Activated CD8-positive, alpha-beta memory T cell treated with anti-CD3 and anti-CD28 coated beads, Interleukin-2, amount 10 ng/mL, durations not matched to agents 7 days and 5 days (primary cell): ENCODE measurements at regions of chr20 and their contacts with region 1.

Region 1: GRCh38 chr20:38446441-38447209 is 11.5 kb upstream of the SNHG17 start:
- DNase-seq: peak; percentile 94
- ATAC-seq: peak; percentile 97
- H3K4me3 Mint-ChIP-seq: peak overlapping the region; percentile 72
- H3K27ac Mint-ChIP-seq: peak overlapping the region; percentile 77
- H3K4me1 Mint-ChIP-seq: peaks cover 21% of the 10 kb centered on the region
- H3K27me3 Mint-ChIP-seq: peaks cover 9% of the 10 kb centered on the region

Region 2: DNA sequence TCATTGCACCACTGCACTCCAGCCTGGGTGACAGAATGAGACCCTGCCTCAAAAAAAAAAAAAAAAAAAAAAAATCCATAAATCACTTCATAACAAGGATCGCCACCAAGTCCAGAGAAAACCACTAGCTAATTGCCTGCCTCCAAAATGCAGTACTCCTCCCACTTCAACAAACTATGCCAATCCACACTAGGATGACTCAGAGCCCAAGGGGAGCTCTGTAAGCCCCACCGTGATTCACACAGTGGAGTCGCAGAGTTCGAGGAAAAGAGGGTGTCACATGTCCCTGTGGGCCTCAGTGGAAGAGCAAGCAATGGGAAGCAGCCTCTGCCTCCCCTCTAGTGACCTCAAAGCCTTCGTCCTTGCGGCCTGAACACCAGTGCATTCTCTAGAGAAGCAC is 20.6 kb before region 1 on chr20:
- CTCF ChIA-PET with region 1: interaction called, 11 read pairs
- DNase-seq: no peak
- ATAC-seq: no peak
- H3K4me3 Mint-ChIP-seq: no peak overlapping the region
- H3K27ac Mint-ChIP-seq: no peak overlapping the region
- H3K4me1 Mint-ChIP-seq: peaks cover 40% of the 10 kb centered on the region
- H3K27me3 Mint-ChIP-seq: no peaks in the 10 kb centered on the region

Region 3: DNA sequence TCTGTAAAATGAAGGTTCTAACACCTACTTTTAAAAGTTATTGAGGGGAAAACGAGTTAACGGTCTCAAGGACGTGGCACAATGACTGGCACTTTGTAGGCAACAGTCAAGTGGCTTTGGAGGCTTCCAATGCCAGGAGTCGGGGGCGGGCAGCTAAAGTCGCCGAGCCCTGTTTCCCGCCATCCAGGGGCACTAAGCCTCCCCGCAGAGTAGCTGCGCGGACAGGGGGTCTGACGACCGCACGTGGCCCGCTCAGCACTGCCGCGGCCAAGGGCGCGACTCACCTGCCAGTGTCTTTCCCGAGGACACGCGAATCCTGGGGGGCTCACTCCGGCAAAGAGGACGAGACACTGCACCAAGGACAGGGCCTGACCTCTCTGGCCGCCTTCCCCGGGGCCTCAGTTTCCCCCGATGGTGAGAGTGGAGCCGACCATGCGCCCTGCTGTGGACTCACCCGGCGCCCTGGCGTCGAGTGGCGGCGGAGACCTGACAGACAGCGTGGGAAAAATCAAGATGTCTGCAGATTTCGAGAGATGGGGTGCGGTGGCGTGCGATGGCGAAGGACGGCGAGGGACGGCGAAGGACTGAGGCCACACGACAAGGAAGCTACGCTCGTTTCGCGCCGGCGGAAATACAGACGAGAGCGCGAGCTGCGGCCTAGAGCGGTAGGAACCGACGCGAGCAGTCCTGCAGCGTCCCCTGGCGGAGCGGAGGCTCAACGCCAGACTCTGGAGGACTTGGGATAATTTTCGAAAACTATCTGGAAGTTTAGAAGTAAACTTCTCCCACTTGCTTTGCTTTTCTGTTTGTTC is 11.7 kb before region 1 on chr20 and contains the start of gene SNHG17:
- CTCF ChIA-PET with region 1: interaction called, 125 read pairs
- DNase-seq: peak; percentile 92
- ATAC-seq: peak; percentile 87
- H3K4me3 Mint-ChIP-seq: peak within 1 kb of the TSS; percentile 97
- H3K27ac Mint-ChIP-seq: peak within 1 kb of the TSS; percentile 91
- H3K4me1 Mint-ChIP-seq: peaks cover 42% of the 10 kb centered on the region
- H3K27me3 Mint-ChIP-seq: peaks cover 11% of the 10 kb centered on the region
- total RNA-seq, gene SNHG17: 92.3 to 123 TPM

Region 4: DNA sequence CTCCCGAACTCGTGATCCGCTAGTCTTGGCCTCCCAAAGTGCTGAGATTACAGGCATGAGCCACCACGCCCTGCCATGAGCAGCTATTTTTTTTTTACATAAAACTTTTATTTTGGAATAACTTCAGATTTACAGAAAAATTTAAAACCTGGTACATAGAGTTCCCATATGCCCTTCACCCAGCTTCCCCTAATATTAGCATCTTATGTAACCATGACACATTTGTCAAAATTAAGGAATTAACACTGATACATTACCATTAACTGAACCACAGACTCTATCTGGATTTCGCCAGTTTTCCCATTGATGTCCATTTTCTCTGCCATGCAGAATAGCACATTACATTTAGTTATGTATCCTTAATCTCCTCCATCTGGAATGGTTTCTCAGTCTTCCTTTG is 11.7 kb after region 1 on chr20:
- CTCF ChIA-PET with region 1: interaction called, 11 read pairs
- DNase-seq: no peak
- ATAC-seq: no peak
- H3K4me3 Mint-ChIP-seq: no peak overlapping the region
- H3K27ac Mint-ChIP-seq: no peak overlapping the region
- H3K4me1 Mint-ChIP-seq: no peaks in the 10 kb centered on the region
- H3K27me3 Mint-ChIP-seq: no peaks in the 10 kb centered on the region

Region 5: DNA sequence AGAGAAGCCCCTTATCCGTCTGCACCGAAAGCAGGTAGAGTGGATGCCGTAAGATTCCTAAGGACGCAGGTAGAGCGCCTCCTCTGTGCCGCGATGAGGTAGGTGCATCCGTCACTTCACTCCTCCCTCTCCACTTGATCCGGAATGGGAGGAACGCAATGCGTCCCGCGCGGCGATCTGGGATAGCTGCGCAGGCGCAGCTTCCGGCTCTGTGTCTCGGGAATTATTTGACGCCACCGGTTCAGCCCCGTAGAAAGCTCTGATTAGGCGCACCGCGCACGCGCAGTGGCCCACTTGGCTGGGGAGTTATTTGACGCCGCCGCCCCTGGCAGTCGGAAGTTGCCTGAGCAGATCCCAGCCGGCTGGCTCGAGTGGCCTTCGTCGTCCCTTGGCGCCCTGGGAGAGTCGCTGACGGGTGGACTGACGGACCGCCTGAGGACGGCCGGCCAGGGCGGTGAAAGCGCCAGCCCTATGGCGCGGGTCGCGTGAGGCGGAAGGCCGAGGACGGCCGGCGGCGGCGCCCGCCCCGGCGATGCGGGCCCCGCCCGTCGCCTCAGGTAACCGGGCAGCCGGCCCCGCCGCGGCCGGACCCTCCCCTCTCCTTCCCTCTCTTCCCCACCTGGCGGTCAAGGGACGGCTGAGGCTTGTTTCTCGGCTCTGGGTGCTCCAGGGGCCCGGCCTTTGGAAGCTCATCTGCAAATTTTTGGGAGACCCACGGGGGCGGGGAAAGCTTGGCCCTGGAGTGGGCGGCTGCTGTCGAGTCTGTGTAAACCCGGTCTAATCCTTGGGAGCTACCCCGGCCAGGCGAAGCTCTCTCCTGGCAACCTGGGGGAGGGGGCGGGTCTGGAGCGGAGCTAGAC is 26.1 kb after region 1 on chr20 and contains the start of gene RALGAPB:
- CTCF ChIA-PET with region 1: interaction called, 22 read pairs
- DNase-seq: peak; percentile 98
- ATAC-seq: peak; percentile 94
- H3K4me3 Mint-ChIP-seq: peak within 1 kb of the TSS; percentile 83
- H3K27ac Mint-ChIP-seq: peak within 1 kb of the TSS; percentile 76
- H3K4me1 Mint-ChIP-seq: peaks cover 39% of the 10 kb centered on the region
- H3K27me3 Mint-ChIP-seq: peaks cover 6% of the 10 kb centered on the region
- total RNA-seq, gene RALGAPB: 31.9 to 32.2 TPM

Region 6: GRCh38 chr20:38514185-38514584 is 67.6 kb after region 1 on chr20:
- CTCF ChIA-PET with region 1: no interaction called
- DNase-seq: no peak
- ATAC-seq: no peak
- H3K4me3 Mint-ChIP-seq: no peak overlapping the region
- H3K27ac Mint-ChIP-seq: no peak overlapping the region
- H3K4me1 Mint-ChIP-seq: no peaks in the 10 kb centered on the region
- H3K27me3 Mint-ChIP-seq: no peaks in the 10 kb centered on the region